Right cardiac atrium (tissue), 5 donors: ENCODE measurements at regions of chr13 and their contacts with region 1.

Region 1: DNA sequence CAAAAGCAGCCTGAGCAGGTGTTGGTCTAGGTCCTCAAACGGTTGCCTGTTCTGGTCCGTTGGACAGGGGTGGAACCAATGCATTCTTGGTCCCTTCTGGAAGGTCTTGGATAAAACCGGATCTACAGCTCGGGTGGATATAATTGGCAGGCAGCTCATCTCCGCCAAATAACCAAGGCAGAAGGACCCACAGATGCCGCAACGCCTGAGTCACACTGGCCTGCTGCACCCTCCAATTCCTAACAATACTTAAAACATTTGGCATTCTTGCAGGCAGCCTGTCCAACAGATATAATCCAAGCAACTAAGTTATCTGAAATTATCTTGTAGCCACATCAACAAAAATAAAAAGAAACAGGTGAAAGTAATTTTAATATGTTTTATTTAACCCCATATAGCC is 59.0 kb upstream of the FGF14 start:
- DNase-seq: no peak
- ATAC-seq: no peak
- H3K4me3 ChIP-seq: no peak overlapping the region
- H3K27ac ChIP-seq: no peak overlapping the region
- H3K4me1 ChIP-seq: no peaks in the 10 kb centered on the region
- H3K27me3 ChIP-seq: no peaks in the 10 kb centered on the region

Region 2: GRCh38 chr13:102141625-102142472 is 319.0 kb before region 1 on chr13:
- intact Hi-C with region 1: loop called in 1 of 4 experiments (anchors 5 kb)
- DNase-seq: no peak
- ATAC-seq: no peak
- H3K4me3 ChIP-seq: no peak overlapping the region
- H3K27ac ChIP-seq: no peak overlapping the region
- H3K4me1 ChIP-seq: no peaks in the 10 kb centered on the region
- H3K27me3 ChIP-seq: no peaks in the 10 kb centered on the region

Region 3: DNA sequence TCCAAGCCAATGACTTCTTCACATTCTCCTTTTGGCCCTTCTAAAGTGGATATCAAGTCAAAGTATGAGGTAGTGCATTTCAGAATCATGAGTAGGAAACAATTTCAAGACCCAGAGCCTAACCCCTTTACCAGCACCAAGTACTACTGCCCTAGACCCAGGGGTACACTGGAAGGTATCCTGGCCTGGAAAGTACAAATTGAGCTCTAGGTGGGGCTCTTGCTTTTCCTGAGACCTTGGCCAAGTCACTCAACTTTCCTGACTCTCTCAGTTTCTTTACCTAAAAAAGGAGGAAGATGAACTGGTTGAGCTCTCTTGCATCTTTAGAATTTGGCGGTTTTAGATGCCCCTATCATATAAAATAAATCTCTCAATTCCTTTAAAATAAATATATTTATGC is 263.6 kb before region 1 on chr13:
- intact Hi-C with region 1: loop called in 1 of 4 experiments (anchors 5 kb)
- DNase-seq: no peak
- ATAC-seq: peak; percentile 58 to 68
- H3K4me3 ChIP-seq: no peak overlapping the region
- H3K27ac ChIP-seq: no peak overlapping the region
- H3K4me1 ChIP-seq: no peaks in the 10 kb centered on the region
- H3K27me3 ChIP-seq: no peaks in the 10 kb centered on the region